GM12878 (cell line): ENCODE measurements at regions of chr1 and their contacts with region 1.

Region 1: DNA sequence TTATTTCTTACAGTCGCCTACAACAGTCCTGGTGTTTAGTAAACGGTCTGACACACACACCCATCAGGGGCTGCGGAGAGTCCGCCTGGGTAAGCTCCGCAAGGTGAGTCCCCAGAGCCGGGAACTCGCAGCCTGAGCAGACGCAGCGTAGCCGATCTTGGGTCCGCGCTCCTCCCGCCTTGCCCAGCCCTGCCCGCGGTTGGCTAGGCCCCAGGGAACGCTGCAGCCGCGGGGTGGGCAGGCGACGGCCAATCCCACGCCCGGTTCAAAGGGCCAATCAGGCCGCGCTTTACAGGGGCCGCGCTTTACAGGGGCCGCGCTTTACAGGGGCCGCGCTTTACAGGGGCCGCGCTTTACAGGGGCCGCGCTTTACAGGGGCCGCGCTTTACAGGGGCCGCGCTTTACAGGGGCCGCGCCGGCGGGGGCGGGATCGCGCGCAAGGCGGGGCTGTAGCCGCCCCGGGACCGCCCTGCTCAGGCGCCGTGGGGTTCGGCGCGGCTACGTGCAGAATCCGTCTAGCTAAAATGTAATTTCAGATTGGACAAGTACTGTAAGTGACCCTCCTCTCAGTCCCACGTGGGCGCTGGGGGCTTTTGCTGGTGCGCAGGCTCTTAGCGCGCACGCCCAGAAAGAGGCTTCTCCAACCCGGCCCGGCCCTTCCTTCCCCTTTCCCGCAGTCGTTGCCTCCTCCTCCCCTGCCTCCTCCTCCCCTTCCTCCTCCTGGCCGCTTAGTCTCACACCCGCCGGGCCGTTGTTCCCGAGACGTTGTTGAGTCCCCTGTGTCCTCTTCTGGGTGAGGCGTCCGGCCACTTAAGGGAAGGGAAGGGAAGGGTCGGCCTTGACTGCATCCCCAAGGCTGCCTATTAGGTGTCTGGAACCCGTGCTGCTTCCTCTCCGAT is at the start of gene FGGY:
- DNase-seq: peak; percentile 89
- ATAC-seq: peak; percentile 97
- H3K4me3 ChIP-seq: peak within 1 kb of the TSS; percentile 92
- H3K27ac ChIP-seq: peak within 1 kb of the TSS; percentile 80
- H3K4me1 ChIP-seq: peaks cover 3% of the 10 kb centered on the region; the same call in 1 of the 2 replicates
- H3K27me3 ChIP-seq: no peaks in the 10 kb centered on the region
- CTCF ChIP-seq: no peak
- EP300 ChIP-seq: no peak
- POLR2A ChIP-seq: peak; percentile 89
- RAD21 ChIP-seq: 0 out of 2 replicates have a peak, but pooled peaks have one; percentile 10
- polyA plus RNA-seq, gene FGGY: 9.1 to 9.5 TPM

Region 2: DNA sequence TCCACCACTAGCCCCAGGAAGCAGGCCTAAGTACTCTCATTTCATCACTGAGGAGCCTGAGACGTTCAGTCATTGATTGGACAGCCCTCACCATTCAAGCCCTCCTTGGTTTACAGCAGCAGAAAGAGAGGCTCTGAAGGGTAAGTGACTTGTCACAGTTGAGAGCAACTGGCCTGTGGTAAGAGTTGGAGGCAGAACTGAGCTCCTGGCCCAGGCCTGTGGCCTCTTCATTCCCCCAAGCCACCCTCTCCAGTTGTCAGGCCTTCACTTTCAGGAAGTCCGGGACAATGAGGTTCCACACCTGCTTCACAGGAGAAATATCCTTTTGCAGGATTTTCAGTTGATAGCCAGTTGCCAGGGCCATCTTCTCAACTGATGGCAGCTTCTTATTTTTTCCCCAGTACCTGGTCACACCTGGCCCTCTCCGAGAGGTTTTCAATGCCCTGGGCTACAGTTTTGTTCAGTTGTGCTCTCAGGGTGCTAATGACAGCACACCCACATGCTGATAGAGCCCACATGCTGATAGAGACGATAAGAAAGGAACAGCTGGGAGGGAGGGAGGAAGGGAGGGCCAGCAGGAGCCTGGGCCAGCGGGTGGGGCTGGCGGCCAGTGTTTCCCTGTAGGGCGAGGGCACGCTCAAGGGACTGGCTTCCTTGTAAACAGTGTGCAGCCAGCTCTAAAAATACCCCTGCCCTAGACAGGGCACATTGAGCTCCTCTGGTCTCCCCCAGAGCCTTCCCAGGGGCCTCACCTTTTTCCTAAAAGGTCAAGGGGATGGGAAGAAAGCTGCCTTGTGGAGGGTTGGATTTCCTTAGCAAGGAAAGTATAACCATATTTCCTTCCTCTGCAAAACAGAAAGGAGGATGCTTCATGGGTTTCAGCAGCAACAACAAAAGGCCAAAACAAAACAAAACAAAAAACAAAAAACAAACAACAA is 400.1 kb before region 1 on chr1:
- CTCF ChIA-PET with region 1: no interaction called
- POLR2A ChIA-PET with region 1: no interaction called
- RAD21 ChIA-PET with region 1: no interaction called
- SMC1A ChIA-PET with region 1: no interaction called
- in situ Hi-C with region 1: no loop called
- intact Hi-C with region 1: loop called (anchors 5 kb)
- DNase-seq: no peak
- ATAC-seq: no peak
- H3K4me3 ChIP-seq: no peak overlapping the region
- H3K27ac ChIP-seq: no peak overlapping the region
- H3K4me1 ChIP-seq: no peaks in the 10 kb centered on the region
- H3K27me3 ChIP-seq: no peaks in the 10 kb centered on the region; a peak in 1 of 4 replicates
- CTCF ChIP-seq: no peak
- EP300 ChIP-seq: no peak
- POLR2A ChIP-seq: no peak
- RAD21 ChIP-seq: no peak

Region 3: DNA sequence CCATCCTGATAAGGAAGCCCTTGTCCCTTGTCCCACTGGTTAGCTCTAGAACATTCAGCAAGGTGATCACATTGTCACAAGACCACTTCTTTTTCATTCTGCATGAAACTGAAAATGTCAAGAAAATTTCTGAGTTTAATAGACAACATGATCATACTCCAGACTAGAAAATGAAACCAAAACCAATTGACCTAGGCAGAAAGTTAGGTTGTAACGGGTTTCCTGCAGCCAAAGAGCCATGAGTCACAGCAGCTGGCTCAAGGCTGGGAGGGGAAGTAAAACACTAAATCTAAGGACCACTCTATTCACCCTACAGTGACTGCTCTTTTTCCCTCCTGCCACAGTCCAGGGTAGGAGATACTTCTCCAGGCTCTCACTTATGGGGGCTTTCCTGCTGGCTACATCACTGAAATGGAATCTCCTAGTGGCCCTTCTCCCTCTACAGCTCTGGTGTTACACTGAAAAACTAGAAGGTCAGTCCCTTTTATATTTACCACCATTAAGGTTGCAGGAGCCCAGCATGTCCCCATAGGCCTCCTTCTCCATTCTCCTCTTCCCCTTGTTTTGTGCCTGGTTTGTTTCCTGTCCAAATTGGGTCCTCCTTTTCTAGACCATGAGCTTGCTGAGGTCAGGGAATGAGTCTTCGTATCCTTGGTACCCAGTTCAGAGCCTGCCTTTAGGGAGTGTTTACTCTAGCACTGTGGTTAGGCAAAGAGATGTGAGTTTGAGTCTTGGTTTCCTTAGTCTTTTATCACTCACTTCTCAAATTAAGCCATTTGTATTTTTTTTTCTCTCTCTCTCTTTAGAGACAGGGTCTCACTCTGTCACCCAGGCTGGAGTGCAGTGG is 276.2 kb before region 1 on chr1:
- CTCF ChIA-PET with region 1: no interaction called
- POLR2A ChIA-PET with region 1: no interaction called
- RAD21 ChIA-PET with region 1: interaction called, 4 read pairs
- SMC1A ChIA-PET with region 1: interaction called, 5 read pairs
- in situ Hi-C with region 1: no loop called
- intact Hi-C with region 1: loop called (anchors 10 kb)
- DNase-seq: peak; percentile 87
- ATAC-seq: peak; percentile 93
- H3K4me3 ChIP-seq: peak overlapping the region; percentile 53; the same call in 1 of the 2 replicates
- H3K27ac ChIP-seq: peak overlapping the region; percentile 75
- H3K4me1 ChIP-seq: peaks cover 20% of the 10 kb centered on the region
- H3K27me3 ChIP-seq: no peaks in the 10 kb centered on the region
- CTCF ChIP-seq: no peak
- EP300 ChIP-seq: no peak
- POLR2A ChIP-seq: no peak
- RAD21 ChIP-seq: peak; percentile 12; the same call in 1 of the 2 replicates

Region 4: GRCh38 chr1:59146651-59147358 is 149.8 kb before region 1 on chr1:
- CTCF ChIA-PET with region 1: interaction called, 3 read pairs
- POLR2A ChIA-PET with region 1: no interaction called
- RAD21 ChIA-PET with region 1: no interaction called
- SMC1A ChIA-PET with region 1: interaction called, 4 read pairs
- in situ Hi-C with region 1: no loop called
- intact Hi-C with region 1: loop called (anchors 10 kb)
- DNase-seq: no peak
- ATAC-seq: peak; percentile 87
- H3K4me3 ChIP-seq: peak overlapping the region; percentile 62
- H3K27ac ChIP-seq: peak overlapping the region; percentile 60
- H3K4me1 ChIP-seq: peaks cover 32% of the 10 kb centered on the region
- H3K27me3 ChIP-seq: no peaks in the 10 kb centered on the region
- CTCF ChIP-seq: peak in 2 of 3 experiments; percentile 1 to 18; a peak in 1 of 6 replicates
- EP300 ChIP-seq: no peak
- POLR2A ChIP-seq: peak; percentile 73
- RAD21 ChIP-seq: peak; percentile 41

Region 5: DNA sequence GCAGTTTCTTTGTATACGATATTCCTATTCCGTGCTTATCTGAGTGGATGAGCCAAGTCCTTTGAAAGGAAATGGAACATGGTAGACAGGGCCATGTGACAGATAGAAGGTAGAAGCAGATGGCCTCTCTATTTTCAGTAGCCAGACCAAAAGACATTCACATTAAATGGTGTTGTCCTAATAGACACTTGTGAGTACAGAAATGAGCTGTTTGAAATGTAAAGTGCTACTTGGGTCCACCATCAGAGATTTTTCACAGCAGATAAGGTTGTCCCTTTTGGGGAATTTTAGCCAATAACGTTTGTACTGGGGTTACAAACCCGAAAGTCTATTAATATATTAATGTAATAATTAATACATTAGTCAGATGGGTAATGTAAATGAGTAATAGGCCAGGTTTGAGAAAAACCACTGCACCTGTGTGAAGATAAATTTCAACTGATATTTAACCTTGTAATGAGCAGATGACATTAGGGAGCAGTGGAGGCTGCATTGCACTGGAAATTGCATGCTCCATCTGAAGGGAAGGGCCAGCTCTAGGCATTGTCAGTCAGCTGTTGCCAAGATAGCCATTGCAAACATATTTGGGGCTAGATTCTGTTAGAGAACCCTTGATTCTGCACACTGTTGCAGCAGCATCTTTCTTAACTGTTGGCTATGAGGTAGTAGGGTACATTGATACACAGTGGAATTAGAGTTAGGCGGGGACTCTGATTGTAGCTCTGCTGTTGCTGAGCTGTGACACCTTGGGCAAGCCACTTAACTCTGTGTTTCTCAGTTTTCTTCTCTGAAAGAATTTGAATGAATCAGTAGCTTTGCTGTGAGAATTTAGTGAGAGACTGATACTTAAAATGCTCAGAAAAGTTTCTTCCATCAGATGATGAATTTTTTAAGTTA is 44.1 kb after region 1 on chr1:
- CTCF ChIA-PET with region 1: no interaction called
- POLR2A ChIA-PET with region 1: no interaction called
- RAD21 ChIA-PET with region 1: no interaction called
- SMC1A ChIA-PET with region 1: no interaction called
- in situ Hi-C with region 1: no loop called
- intact Hi-C with region 1: no loop called
- DNase-seq: peak; percentile 28
- ATAC-seq: peak; percentile 68
- H3K4me3 ChIP-seq: no peak overlapping the region
- H3K27ac ChIP-seq: no peak overlapping the region
- H3K4me1 ChIP-seq: no peaks in the 10 kb centered on the region
- H3K27me3 ChIP-seq: no peaks in the 10 kb centered on the region
- CTCF ChIP-seq: no peak
- EP300 ChIP-seq: no peak
- POLR2A ChIP-seq: no peak
- RAD21 ChIP-seq: no peak

Region 6: DNA sequence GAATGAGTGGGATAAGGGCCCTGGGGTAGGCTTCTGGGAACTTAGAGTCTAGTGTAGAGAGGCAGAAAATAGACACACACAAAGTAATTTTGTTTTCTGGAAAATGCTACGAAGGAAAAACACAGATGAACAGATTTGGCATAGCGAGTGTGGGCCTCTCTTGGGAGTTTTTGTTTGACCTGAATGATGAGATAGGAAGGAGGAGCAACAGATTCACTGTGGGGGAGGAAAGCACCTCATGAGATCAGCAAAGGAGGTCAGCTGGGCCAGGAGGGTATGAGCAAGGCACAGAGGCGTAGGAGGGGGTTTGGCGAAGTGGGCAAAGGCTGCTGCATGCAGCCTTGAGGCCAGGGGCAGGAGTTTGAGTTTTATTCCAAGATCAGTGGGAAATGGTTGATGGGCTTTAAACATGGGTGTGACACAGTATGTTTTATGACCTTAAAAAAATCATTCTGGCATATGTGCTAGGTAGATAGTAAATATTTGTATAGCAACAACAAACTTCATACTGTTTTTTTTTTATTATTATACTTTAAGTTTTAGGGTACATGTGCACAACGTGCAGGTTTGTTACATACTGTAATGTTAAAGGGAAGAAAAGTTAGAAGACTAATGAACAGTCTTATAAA is 58.2 kb after region 1 on chr1:
- CTCF ChIA-PET with region 1: no interaction called
- POLR2A ChIA-PET with region 1: interaction called, 3 read pairs
- RAD21 ChIA-PET with region 1: interaction called, 4 read pairs
- SMC1A ChIA-PET with region 1: interaction called, 10 read pairs
- in situ Hi-C with region 1: no loop called
- intact Hi-C with region 1: no loop called
- DNase-seq: no peak
- ATAC-seq: peak; percentile 91
- H3K4me3 ChIP-seq: no peak overlapping the region
- H3K27ac ChIP-seq: peak overlapping the region; percentile 3; the same call in 1 of the 2 replicates
- H3K4me1 ChIP-seq: peaks cover 6% of the 10 kb centered on the region; the same call in 1 of the 2 replicates
- H3K27me3 ChIP-seq: no peaks in the 10 kb centered on the region
- CTCF ChIP-seq: no peak
- EP300 ChIP-seq: no peak
- POLR2A ChIP-seq: no peak
- RAD21 ChIP-seq: no peak

Region 7: DNA sequence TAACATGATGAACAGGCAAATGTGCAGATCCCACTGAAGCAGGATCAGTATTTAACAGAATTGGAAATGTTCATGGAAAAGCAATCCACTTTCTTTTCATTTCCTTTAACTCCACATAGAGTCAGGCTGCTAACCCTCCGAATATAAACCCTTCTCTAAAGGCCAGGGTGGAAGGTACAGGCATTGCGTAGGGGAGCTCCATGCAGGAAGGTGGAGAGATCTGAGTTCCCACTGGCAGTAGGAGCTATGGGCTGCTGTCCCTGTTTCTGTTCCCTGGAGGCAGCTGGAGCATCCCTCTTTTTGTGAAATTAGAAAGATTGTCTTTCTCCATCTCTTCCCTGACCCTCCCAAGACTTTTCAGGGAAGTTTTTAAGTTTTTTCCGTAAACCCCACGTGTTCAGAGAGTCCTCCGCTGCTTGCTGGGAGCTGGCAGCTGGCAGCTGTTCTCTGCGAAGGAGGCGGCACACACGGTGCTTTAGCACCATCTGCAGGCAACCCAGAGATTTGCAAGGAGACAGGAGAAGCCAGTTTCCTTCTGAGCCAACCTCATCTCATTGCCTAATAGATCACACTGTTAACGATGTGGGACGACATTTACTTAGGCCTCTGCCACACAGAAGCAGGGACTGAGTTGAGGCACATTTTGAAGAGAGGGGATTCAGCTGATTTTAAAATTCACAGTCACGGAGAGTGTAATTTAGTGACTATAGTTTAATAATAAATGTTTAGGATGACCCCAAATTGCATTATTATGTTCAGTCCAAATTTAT is 462.7 kb after region 1 on chr1:
- CTCF ChIA-PET with region 1: interaction called, 6 read pairs
- POLR2A ChIA-PET with region 1: no interaction called
- RAD21 ChIA-PET with region 1: interaction called, 4 read pairs
- SMC1A ChIA-PET with region 1: interaction called, 3 read pairs
- in situ Hi-C with region 1: no loop called
- intact Hi-C with region 1: loop called (anchors 10 kb)
- DNase-seq: peak; percentile 46
- ATAC-seq: peak; percentile 98
- H3K4me3 ChIP-seq: no peak overlapping the region
- H3K27ac ChIP-seq: no peak overlapping the region
- H3K4me1 ChIP-seq: no peaks in the 10 kb centered on the region
- H3K27me3 ChIP-seq: no peaks in the 10 kb centered on the region
- CTCF ChIP-seq: peak; percentile 91 to 97 (median 96)
- EP300 ChIP-seq: no peak
- POLR2A ChIP-seq: no peak
- RAD21 ChIP-seq: peak; percentile 98